Adrenal gland (tissue), 19 donors: ENCODE measurements at regions of chr11 and their contacts with region 1.

Region 1: DNA sequence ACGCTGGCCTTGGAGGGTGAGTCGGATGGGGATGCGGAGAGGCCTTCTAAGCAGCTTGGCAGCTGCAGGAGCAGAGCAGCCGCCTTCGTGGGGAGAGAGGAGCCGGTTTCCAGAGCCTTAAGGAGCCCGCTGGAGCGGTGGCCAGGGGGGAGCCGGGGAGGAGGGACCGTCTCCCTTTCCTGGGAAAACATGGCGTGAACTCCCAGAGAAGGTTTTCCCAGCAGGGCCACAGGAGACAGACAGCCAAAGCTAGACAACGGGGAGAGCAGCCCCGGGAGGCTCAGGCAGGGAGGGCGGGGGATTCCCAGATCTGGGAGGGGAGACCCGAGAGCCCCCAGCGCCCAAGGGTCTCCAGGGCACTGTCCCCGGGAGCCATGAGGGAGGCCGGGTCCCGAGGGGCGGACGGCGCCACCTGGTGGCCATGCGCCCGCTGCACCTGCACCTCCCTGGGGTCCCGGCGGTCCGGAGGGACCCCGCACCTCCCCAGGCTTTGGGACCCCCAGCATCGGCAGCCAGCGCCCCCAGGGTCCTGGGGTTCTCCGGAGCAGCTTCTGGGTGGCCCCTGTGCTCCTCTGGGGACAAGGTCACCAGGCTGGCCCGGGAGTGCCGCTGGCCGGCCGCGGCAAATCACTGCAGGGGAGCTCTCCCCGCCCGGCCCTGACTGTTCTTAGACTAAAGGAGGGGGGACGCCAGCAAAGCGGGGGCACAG is 2.4 kb upstream of the SYT8 start:
- DNase-seq: peak; percentile 40 to 72 (median 60)
- H3K4me3 ChIP-seq: peak overlapping the region in 2 of 4 donors; percentile 18 to 30
- H3K27ac ChIP-seq: peak overlapping the region in 1 of 5 donors; percentile 16
- H3K4me1 ChIP-seq: peaks cover 6 to 8% of the 10 kb centered on the region in 2 donors
- H3K27me3 ChIP-seq: peaks cover 4% of the 10 kb centered on the region
- CTCF ChIP-seq: peak; percentile 93 to 100 (median 98)
- POLR2A ChIP-seq: no peak

Region 2: GRCh38 chr11:1652771-1653540 is 179.4 kb before region 1 on chr11:
- intact Hi-C with region 1: loop called (anchors 2 to 5 kb)
- DNase-seq: peak; percentile 63 to 88 (median 81)
- H3K4me3 ChIP-seq: no peak overlapping the region
- H3K27ac ChIP-seq: no peak overlapping the region
- H3K4me1 ChIP-seq: peaks cover 0 to 15% of the 10 kb centered on the region in 2 donors
- H3K27me3 ChIP-seq: peaks cover 5% of the 10 kb centered on the region
- CTCF ChIP-seq: peak; percentile 91 to 99 (median 96)
- POLR2A ChIP-seq: no peak

Region 3: DNA sequence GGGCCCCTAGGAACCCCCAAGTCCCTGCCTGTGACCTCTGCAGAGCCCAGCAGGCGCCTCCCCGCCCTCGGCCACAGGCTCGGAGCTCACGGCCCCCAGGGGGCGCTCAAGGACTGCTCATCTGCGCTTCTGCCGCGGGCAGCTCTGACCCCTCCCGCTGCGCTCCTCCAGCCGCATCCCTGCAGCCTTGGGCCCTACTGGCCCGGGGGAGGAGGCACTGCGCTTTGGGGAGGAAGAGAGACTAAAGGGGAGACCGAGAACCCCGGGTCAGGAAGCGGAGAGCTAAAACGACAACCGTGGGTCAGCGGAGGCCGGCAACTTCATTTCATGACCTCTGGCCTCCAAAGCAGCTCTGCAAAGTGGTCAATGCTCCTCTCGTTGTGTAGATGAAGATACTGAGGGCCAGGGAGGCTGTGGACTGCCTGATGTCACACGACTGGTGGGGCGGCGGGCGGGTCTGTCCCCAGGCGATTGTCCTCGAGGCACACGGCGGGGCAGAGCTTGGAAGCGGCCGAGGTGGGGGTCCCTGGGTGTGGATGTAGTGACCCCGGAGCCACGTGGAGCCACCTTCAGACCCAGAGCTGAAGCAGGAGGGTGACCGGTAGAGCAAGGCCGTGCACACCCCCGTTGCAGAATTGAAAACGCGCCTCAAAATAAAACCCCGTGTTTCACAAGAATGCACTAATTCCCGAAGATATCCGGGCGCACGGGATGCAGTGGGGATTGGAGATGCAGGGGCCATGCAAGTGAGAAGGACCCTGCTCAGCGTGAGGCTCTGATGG is 138.1 kb before region 1 on chr11:
- intact Hi-C with region 1: loop called (anchors 2 kb)
- DNase-seq: peak; percentile 82 to 92 (median 90)
- H3K4me3 ChIP-seq: peak overlapping the region in 1 of 4 donors; percentile 21
- H3K27ac ChIP-seq: no peak overlapping the region
- H3K4me1 ChIP-seq: peaks cover 7 to 11% of the 10 kb centered on the region in 2 donors
- H3K27me3 ChIP-seq: no peaks in the 10 kb centered on the region
- CTCF ChIP-seq: peak; percentile 91 to 96 (median 94)
- POLR2A ChIP-seq: no peak

Region 4: DNA sequence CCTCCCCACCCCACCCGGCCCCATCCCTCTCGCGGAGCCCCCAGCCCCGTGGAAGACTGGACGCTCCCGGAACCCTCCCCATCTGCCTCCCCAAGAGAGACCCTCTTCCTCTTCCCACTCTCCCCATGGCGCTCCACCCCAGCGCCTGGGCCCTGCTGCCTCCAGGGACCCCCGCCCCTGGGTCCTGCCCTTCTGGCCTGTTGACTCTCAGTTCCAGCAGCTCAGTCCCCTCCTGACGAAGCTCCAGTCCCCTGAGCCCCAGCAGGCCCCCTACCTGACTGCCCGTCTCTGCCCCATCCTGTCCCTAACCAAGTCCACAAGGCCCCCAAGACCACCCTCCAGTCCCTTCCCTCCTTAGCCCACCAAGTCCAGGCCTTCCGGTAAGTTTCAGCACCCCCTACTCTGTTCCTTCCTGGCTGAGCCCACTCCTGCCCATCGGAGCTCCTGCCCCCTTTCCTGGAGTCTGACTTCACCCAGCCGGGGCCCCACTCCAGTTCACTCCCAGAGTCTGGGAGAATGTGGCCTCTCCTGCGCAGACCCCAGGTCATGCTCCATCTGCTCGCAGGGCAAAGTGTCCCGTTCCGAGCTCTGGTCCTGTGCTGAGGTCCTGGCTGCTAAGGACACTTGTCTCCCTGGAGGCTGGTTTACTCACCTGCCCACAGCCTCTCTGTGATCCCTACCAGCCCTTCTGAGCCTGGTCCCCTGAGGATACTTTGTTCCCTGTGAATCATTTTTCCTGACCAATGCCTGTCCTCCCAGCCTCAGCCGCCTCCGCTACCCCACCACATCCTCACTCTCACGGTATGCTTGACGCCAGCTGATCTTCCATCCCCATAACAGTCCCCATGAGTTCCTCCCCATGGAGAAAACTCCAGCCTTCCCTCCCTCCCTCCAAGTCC is 82.7 kb before region 1 on chr11:
- intact Hi-C with region 1: loop called in 1 of 2 experiments (anchors 5 kb)
- DNase-seq: peak; percentile 39 to 83 (median 76)
- H3K4me3 ChIP-seq: peak overlapping the region in 3 of 4 donors; percentile 13 to 73 (median 25)
- H3K27ac ChIP-seq: peak overlapping the region; percentile 39 to 93 (median 78)
- H3K4me1 ChIP-seq: peaks cover 64 to 78% of the 10 kb centered on the region in 2 donors
- H3K27me3 ChIP-seq: no peaks in the 10 kb centered on the region
- CTCF ChIP-seq: peak in 1 of 6 experiments; percentile 9
- POLR2A ChIP-seq: peak in 1 of 2 donors; percentile 68

Region 5: DNA sequence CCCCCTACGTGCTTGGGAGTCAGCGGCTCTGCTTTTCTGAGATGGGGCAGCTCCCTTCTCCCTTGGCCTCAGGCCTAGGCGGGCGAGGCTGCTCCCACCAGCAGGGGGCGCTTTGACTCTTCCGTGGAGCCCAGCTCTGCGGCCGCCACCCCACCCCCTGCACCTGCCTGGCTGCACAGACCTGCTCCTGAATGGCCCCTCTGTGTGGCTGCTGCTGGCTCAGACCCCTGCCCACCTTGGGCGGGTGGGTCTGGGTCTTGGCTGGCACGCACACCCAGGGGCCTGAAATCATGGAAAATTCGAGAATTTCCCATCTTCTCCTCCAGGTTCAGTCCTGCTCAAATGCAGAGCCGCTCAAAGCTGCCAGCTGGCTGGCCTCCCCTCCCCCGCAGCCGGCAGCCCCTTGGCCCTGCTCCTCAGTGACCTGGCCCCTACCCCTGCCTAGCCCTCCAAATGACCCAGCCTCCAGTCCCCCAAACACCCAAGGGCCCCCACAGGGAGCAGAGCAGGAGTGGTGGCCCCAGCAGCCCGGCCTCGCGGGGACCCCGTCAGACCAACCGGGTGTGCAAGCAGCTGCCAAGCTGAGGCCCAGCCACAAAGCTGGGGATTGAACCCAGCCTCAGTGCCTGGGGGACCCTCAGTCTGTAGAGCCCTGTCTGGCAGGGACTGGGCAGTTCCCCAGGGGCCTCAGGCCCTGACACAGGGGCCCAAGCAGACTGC is 50.3 kb after region 1 on chr11:
- intact Hi-C with region 1: no loop called
- DNase-seq: peak; percentile 73 to 88 (median 82)
- H3K4me3 ChIP-seq: no peak overlapping the region
- H3K27ac ChIP-seq: peak overlapping the region in 3 of 5 donors; percentile 26 to 97 (median 76)
- H3K4me1 ChIP-seq: peaks cover 0 to 24% of the 10 kb centered on the region in 2 donors
- H3K27me3 ChIP-seq: no peaks in the 10 kb centered on the region
- CTCF ChIP-seq: peak; percentile 81 to 93 (median 86)
- POLR2A ChIP-seq: no peak